Mammary epithelial cell (primary cell): ENCODE measurements at regions of chr10 and their contacts with region 1.

Region 1: GRCh38 chr10:93445097-93445960 is 36.8 kb downstream of the MYOF start:
- DNase-seq: peak; percentile 99
- H3K4me3 ChIP-seq: no peak overlapping the region
- H3K27ac ChIP-seq: peak overlapping the region; percentile 97
- H3K4me1 ChIP-seq: peaks cover 51% of the 10 kb centered on the region
- H3K27me3 ChIP-seq: no peaks in the 10 kb centered on the region
- CTCF ChIP-seq: no peak

Region 2: GRCh38 chr10:93288654-93289634 is 156.4 kb before region 1 on chr10:
- CTCF ChIA-PET with region 1: no interaction called
- dilution Hi-C with region 1: no loop called
- in situ Hi-C with region 1: no loop called
- intact Hi-C with region 1: no loop called
- DNase-seq: peak; percentile 70
- H3K4me3 ChIP-seq: no peak overlapping the region
- H3K27ac ChIP-seq: no peak overlapping the region
- H3K4me1 ChIP-seq: peaks cover 13% of the 10 kb centered on the region
- H3K27me3 ChIP-seq: no peaks in the 10 kb centered on the region
- CTCF ChIP-seq: peak; percentile 69 to 80

Region 3: GRCh38 chr10:93458821-93459257 is 13.5 kb after region 1 on chr10:
- CTCF ChIA-PET with region 1: interaction called, 7 read pairs
- dilution Hi-C with region 1: no loop called
- in situ Hi-C with region 1: no loop called
- intact Hi-C with region 1: loop called (anchors 1 kb)
- DNase-seq: peak; percentile 97
- H3K4me3 ChIP-seq: peak overlapping the region in 1 of 3 experiments; percentile 21
- H3K27ac ChIP-seq: peak overlapping the region; percentile 93
- H3K4me1 ChIP-seq: peaks cover 49% of the 10 kb centered on the region
- H3K27me3 ChIP-seq: no peaks in the 10 kb centered on the region
- CTCF ChIP-seq: no peak

Region 4: DNA sequence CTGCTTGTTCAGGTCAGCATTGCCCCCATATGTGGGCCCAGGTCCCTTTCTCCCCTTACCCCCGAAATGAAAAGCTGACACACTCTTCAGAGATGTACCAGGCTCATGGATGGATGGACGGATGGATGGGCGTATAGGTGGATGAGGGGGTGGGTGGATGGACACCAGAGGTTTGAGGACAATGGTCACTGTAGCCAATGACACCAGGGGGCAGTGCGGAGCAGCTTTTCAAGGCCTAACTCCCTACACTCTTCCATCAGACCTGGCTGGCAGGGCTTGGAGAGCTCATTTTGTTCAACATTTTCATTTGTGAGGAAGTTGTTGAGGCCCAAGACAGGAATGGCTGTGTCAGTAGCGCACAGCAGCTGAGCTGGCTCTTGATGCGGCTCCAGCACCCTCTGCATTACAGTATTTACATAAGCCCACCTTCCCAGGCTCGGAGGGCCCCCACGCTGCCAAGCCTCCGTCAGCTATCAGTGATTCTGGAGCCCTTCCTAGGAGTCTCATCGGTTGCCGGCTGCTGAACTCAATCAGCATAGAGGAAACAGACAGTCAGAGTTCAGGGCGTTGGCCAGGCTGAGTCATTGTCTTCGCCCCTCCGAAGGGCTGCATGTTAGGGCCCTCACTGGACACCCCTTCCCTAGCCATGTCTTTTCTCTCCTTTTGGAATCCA is 109.6 kb after region 1 on chr10:
- CTCF ChIA-PET with region 1: no interaction called
- dilution Hi-C with region 1: no loop called
- in situ Hi-C with region 1: no loop called
- intact Hi-C with region 1: no loop called
- DNase-seq: peak; percentile 55
- H3K4me3 ChIP-seq: no peak overlapping the region
- H3K27ac ChIP-seq: no peak overlapping the region
- H3K4me1 ChIP-seq: no peaks in the 10 kb centered on the region
- H3K27me3 ChIP-seq: no peaks in the 10 kb centered on the region
- CTCF ChIP-seq: peak; percentile 82 to 89